ENCODE measurements at regions of chr19 and their contacts with region 1.

Region 1: DNA sequence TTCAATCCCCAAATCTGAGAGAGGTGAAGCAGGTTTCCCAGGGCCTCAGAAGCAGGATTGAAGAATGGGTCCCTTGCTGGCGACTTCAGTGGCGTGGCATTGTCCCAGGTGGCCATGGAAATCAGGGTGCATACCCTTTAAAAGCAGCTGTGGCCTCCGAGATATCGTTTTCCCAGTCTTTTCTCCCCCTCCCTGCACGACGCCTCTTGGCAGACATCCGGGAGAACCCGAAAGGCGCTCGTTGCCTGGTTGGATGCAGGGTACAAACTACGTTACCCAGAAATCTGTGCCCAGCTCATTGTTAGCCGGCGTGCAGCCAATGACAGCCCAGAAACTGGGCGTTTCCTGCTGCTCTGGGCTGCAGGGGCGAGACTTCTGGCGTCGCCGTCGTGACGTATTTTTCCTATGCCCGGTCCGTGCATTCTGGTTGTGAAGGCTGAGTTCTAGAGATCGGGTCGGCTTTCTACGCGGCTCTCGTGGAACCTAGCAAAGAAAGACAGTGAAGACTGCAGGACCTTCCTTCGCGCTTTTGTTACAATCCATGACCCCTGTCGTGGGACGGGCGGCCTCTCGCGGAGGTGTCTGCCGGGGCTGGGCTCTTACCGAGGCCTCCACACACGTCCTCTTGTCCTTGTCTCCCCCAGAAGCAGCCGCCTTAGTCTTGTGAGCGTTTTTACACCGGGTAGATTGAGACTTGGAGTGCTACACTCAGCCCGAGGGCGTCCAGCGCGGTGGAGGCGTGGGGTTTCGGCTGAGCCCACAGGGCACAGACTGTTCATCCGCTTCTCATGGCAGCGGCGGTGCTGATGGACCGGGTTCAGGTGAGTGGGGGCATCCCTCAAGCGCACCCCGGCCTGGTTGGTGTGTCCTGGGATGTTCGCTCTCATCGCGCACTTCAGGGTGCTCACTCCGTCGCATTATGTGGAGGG is at the start of gene ZNF304:
- DNase-seq: peak; percentile 73
- ATAC-seq: peak; percentile 100
- H3K4me3 ChIP-seq: peak within 1 kb of the TSS; percentile 83
- H3K27ac ChIP-seq: peak within 1 kb of the TSS; percentile 57
- H3K4me1 ChIP-seq: no peaks in the 10 kb centered on the region
- H3K27me3 ChIP-seq: no peaks in the 10 kb centered on the region
- CTCF ChIP-seq: no peak
- EP300 ChIP-seq: no peak
- POLR2A ChIP-seq: peak; percentile 62
- RAD21 ChIP-seq: no peak
- polyA plus RNA-seq, gene ZNF304: 1.1 to 1.5 TPM

Region 2: GRCh38 chr19:57302020-57302465 is 49.1 kb before region 1 on chr19:
- CTCF ChIA-PET with region 1: no interaction called
- POLR2A ChIA-PET with region 1: interaction called, 11 read pairs
- RAD21 ChIA-PET with region 1: no interaction called
- SMC1A ChIA-PET with region 1: interaction called, 3 read pairs
- in situ Hi-C with region 1: no loop called
- intact Hi-C with region 1: no loop called
- DNase-seq: no peak
- ATAC-seq: peak; percentile 76
- H3K4me3 ChIP-seq: no peak overlapping the region
- H3K27ac ChIP-seq: no peak overlapping the region
- H3K4me1 ChIP-seq: no peaks in the 10 kb centered on the region
- H3K27me3 ChIP-seq: no peaks in the 10 kb centered on the region
- CTCF ChIP-seq: no peak
- EP300 ChIP-seq: no peak
- POLR2A ChIP-seq: peak; percentile 70
- RAD21 ChIP-seq: no peak

Region 3: DNA sequence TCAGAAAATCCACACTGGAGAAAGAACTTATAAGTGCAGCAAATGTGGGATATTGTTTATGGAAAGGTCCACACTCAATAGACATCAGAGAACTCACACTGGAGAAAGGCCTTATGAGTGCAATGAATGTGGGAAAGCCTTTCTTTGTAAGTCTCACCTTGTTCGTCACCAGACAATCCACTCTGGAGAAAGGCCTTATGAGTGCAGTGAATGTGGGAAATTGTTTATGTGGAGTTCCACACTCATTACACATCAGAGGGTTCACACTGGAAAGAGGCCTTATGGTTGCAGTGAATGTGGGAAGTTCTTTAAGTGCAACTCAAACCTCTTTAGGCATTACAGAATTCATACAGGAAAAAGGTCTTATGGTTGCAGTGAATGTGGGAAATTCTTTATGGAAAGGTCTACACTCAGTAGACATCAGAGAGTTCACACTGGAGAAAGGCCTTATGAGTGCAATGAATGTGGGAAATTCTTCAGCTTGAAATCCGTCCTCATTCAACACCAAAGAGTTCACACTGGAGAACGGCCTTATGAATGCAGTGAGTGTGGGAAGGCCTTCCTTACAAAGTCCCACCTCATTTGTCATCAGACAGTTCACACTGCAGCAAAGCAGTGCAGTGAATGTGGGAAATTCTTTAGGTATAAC is 26.5 kb after region 1 on chr19:
- CTCF ChIA-PET with region 1: no interaction called
- POLR2A ChIA-PET with region 1: no interaction called
- RAD21 ChIA-PET with region 1: no interaction called
- SMC1A ChIA-PET with region 1: no interaction called
- in situ Hi-C with region 1: no loop called
- intact Hi-C with region 1: no loop called
- DNase-seq: no peak
- ATAC-seq: no peak
- H3K4me3 ChIP-seq: no peak overlapping the region
- H3K27ac ChIP-seq: no peak overlapping the region
- H3K4me1 ChIP-seq: no peaks in the 10 kb centered on the region
- H3K27me3 ChIP-seq: no peaks in the 10 kb centered on the region
- CTCF ChIP-seq: no peak
- EP300 ChIP-seq: no peak
- POLR2A ChIP-seq: no peak
- RAD21 ChIP-seq: no peak

Region 4: GRCh38 chr19:57627417-57627816 is 276.3 kb after region 1 on chr19:
- CTCF ChIA-PET with region 1: no interaction called
- POLR2A ChIA-PET with region 1: no interaction called
- RAD21 ChIA-PET with region 1: no interaction called
- SMC1A ChIA-PET with region 1: no interaction called
- in situ Hi-C with region 1: no loop called
- intact Hi-C with region 1: no loop called
- DNase-seq: no peak
- ATAC-seq: no peak
- H3K4me3 ChIP-seq: no peak overlapping the region
- H3K27ac ChIP-seq: no peak overlapping the region
- H3K4me1 ChIP-seq: no peaks in the 10 kb centered on the region
- H3K27me3 ChIP-seq: no peaks in the 10 kb centered on the region
- CTCF ChIP-seq: no peak
- EP300 ChIP-seq: no peak
- POLR2A ChIP-seq: no peak
- RAD21 ChIP-seq: no peak

Measured in GM12878 (cell line).